WTC11 (cell line): ENCODE measurements at regions of chr18 and their contacts with region 1.

Region 1: GRCh38 chr18:9334329-9334972 is at the start of gene TWSG1:
- DNase-seq: peak; percentile 96
- ATAC-seq: peak; percentile 92
- H3K4me3 Mint-ChIP-seq: peak within 1 kb of the TSS; percentile 86
- H3K27ac Mint-ChIP-seq: peak within 1 kb of the TSS; percentile 94
- H3K4me1 Mint-ChIP-seq: peaks cover 10% of the 10 kb centered on the region; the same call in 1 of the 2 replicates
- H3K27me3 Mint-ChIP-seq: peaks cover 27% of the 10 kb centered on the region
- CTCF ChIP-seq: 0 out of 2 replicates have a peak, but pooled peaks have one; percentile 12
- total RNA-seq, gene TWSG1: 18.2 to 19.3 TPM (median 18.3 TPM) in 3 replicates

Region 2: GRCh38 chr18:9136315-9137155 is 197.9 kb before region 1 on chr18 and contains the start of gene ANKRD12:
- CTCF ChIA-PET with region 1: interaction called, 3 read pairs
- POLR2A ChIA-PET with region 1: interaction called, 10 read pairs
- DNase-seq: peak; percentile 93
- ATAC-seq: peak; percentile 74
- H3K4me3 Mint-ChIP-seq: peak within 1 kb of the TSS; percentile 91
- H3K27ac Mint-ChIP-seq: peak within 1 kb of the TSS; percentile 99
- H3K4me1 Mint-ChIP-seq: peaks cover 38% of the 10 kb centered on the region
- H3K27me3 Mint-ChIP-seq: no peaks in the 10 kb centered on the region
- CTCF ChIP-seq: no peak
- total RNA-seq, gene ANKRD12: 42.2 to 44.7 TPM (median 43.4 TPM) in 3 replicates